Endothelial cell of umbilical vein (primary cell): ENCODE measurements at regions of chr1 and their contacts with region 1.

Region 1: DNA sequence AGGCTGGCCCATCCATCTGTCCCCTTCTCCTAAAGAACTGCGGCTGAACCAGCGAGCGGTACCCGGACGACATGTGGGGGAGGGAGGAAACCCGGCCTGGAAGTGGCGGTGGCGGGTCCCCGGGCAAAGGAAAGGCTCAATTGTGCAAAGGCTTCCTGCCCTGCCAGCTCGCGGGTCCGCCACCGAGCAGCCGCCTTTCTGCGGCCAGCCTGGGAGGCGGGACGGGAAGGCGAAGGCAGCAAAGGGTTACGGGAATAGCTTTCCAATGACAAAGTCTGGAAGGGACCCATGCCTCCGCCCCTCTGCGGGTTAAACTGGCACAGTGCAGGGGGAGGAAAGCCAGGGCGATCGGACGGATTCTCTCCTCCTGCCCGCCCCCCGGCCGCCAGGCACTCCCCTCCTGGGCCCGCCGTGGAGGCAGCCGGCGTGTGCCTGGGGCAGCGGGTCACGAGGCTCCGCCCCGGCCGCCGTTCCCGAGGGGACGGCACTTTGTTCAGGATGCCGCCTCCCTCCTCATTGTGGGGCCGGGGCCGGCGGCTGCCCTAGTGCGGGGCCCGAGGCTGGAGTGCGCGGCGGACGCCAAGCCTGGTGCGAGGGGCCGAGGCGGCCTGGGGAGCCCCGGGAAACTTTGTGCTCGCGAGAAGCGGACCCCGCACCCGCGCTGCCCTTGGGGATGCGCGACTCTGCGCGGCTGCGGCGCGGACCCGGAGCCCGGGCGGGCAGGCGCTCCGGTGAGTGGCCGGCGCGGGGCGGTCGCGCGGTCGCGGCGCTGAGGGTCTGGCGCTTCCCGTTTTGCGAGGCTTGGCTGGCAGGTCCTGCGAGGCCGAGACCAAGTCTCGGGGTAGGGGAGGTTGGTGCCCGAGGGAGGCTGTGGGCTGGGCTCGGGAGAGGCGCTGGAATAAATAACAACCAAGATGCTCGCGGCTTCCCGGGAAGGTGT is at the start of gene NAV1:
- DNase-seq: peak; percentile 84
- H3K4me3 ChIP-seq: peak within 1 kb of the TSS; percentile 70 to 90 (median 85)
- H3K27ac ChIP-seq: peak within 1 kb of the TSS; percentile 93
- H3K4me1 ChIP-seq: peaks cover 74% of the 10 kb centered on the region
- H3K27me3 ChIP-seq: no peaks in the 10 kb centered on the region
- CTCF ChIP-seq: no peak
- POLR2A ChIP-seq: peak; percentile 85
- total RNA-seq, gene NAV1: 136 and 138 TPM in 2 replicates

Region 2: DNA sequence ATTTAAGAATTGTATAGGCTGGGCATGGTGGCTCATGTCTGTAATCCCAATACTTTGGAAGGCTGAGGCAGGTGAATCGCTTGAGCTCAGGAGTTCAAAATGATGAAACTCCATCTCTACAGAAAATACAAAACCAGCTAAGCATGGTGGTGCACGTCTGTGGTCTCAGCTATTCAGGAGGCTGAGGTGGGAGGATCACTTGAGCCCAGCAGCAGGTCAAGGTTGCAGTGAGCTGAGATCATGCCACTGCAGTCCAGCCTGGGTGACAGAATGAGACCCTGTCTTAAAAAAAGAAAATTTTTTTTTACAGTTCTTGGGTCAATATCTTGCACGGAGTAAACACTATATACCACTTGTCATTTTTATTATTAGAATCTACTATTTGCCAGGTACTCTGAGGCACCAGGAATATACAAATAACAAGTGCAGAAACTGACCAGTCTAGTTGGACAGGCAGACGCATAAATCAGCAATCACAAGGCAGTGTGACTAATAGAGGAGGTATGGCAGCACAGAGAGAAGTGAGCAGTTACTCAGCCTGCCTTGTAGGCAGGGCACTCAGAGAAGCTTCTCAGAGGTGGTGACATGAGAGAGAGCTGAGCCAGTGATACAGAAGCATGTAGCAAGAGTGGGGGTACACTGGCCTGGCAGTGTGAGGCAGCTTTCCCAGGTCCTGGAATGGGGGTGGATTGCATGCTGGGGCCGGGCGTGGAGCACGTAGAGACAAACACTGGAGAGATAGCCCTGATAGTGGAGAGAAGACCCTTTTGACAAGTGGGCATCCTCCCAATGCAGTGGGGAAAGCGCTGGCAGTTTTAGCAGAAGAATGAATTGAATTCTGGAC is 77.8 kb before region 1 on chr1:
- CTCF ChIA-PET with region 1: no interaction called
- POLR2A ChIA-PET with region 1: interaction called, 11 read pairs
- dilution Hi-C with region 1: no loop called
- intact Hi-C with region 1: no loop called
- DNase-seq: peak; percentile 82
- H3K4me3 ChIP-seq: no peak overlapping the region
- H3K27ac ChIP-seq: no peak overlapping the region
- H3K4me1 ChIP-seq: peaks cover 13% of the 10 kb centered on the region
- H3K27me3 ChIP-seq: no peaks in the 10 kb centered on the region
- CTCF ChIP-seq: no peak
- POLR2A ChIP-seq: peak; percentile 53

Region 3: GRCh38 chr1:201506556-201507359 is 32.1 kb before region 1 on chr1 and contains the start of gene CSRP1:
- CTCF ChIA-PET with region 1: interaction called, 11 read pairs
- POLR2A ChIA-PET with region 1: interaction called, 3 read pairs
- dilution Hi-C with region 1: no loop called
- intact Hi-C with region 1: loop called (anchors 1 kb)
- DNase-seq: peak; percentile 74
- H3K4me3 ChIP-seq: peak within 1 kb of the TSS; percentile 47 to 84 (median 72)
- H3K27ac ChIP-seq: peak within 1 kb of the TSS; percentile 89
- H3K4me1 ChIP-seq: peaks cover 49% of the 10 kb centered on the region
- H3K27me3 ChIP-seq: no peaks in the 10 kb centered on the region
- CTCF ChIP-seq: no peak
- POLR2A ChIP-seq: peak; percentile 96
- total RNA-seq, gene CSRP1: 332 and 393 TPM in 2 replicates

Region 4: GRCh38 chr1:201551877-201552731 is 13.2 kb after region 1 on chr1:
- CTCF ChIA-PET with region 1: interaction called, 8 read pairs
- POLR2A ChIA-PET with region 1: no interaction called
- dilution Hi-C with region 1: no loop called
- intact Hi-C with region 1: loop called (anchors 1 kb)
- DNase-seq: peak; percentile 31
- H3K4me3 ChIP-seq: no peak overlapping the region
- H3K27ac ChIP-seq: peak overlapping the region; percentile 38
- H3K4me1 ChIP-seq: peaks cover 48% of the 10 kb centered on the region
- H3K27me3 ChIP-seq: no peaks in the 10 kb centered on the region
- CTCF ChIP-seq: no peak
- POLR2A ChIP-seq: no peak

Region 5: GRCh38 chr1:201602413-201603265 is 63.8 kb after region 1 on chr1:
- CTCF ChIA-PET with region 1: no interaction called
- POLR2A ChIA-PET with region 1: no interaction called
- dilution Hi-C with region 1: no loop called
- intact Hi-C with region 1: loop called (anchors 2 kb)
- DNase-seq: peak; percentile 42
- H3K4me3 ChIP-seq: no peak overlapping the region
- H3K27ac ChIP-seq: peak overlapping the region; percentile 58
- H3K4me1 ChIP-seq: peaks cover 37% of the 10 kb centered on the region
- H3K27me3 ChIP-seq: no peaks in the 10 kb centered on the region
- CTCF ChIP-seq: no peak
- POLR2A ChIP-seq: no peak

Region 6: DNA sequence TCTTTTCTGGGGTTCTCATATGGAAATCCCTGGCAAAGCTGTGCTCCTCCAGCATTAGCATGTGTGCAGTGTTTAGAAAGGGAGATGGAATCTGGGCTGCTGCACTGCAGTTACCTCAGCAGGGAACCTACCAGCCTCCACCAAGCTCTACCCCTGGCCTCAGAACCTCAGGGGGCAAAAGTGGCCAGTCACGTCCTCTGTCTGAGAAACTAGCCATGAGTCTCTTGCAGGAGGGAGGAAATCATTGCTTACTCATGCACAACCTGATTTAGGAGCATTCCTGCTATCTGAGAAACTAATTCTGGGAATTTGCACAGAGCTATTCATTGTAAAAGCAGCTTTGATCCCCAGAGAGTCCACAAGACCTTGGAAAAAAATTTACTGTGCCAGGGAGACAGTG is 209.5 kb after region 1 on chr1:
- CTCF ChIA-PET with region 1: no interaction called
- POLR2A ChIA-PET with region 1: no interaction called
- dilution Hi-C with region 1: no loop called
- intact Hi-C with region 1: loop called (anchors 1 kb)
- DNase-seq: peak; percentile 84
- H3K4me3 ChIP-seq: no peak overlapping the region
- H3K27ac ChIP-seq: peak overlapping the region; percentile 99
- H3K4me1 ChIP-seq: peaks cover 64% of the 10 kb centered on the region
- H3K27me3 ChIP-seq: no peaks in the 10 kb centered on the region
- CTCF ChIP-seq: no peak
- POLR2A ChIP-seq: peak; percentile 46